ENCODE measurements at regions of chr2 and their contacts with region 1.

Region 1: GRCh38 chr2:98444436-98445176 is at the start of gene INPP4A:
- DNase-seq: peak; percentile 83
- ATAC-seq: peak; percentile 96 to 97
- total RNA-seq, gene INPP4A: 14.6 to 19.5 TPM

Region 2: GRCh38 chr2:98324181-98324580 is 120.4 kb before region 1 on chr2:
- intact Hi-C with region 1: no loop called
- DNase-seq: no peak
- ATAC-seq: no peak

Region 3: DNA sequence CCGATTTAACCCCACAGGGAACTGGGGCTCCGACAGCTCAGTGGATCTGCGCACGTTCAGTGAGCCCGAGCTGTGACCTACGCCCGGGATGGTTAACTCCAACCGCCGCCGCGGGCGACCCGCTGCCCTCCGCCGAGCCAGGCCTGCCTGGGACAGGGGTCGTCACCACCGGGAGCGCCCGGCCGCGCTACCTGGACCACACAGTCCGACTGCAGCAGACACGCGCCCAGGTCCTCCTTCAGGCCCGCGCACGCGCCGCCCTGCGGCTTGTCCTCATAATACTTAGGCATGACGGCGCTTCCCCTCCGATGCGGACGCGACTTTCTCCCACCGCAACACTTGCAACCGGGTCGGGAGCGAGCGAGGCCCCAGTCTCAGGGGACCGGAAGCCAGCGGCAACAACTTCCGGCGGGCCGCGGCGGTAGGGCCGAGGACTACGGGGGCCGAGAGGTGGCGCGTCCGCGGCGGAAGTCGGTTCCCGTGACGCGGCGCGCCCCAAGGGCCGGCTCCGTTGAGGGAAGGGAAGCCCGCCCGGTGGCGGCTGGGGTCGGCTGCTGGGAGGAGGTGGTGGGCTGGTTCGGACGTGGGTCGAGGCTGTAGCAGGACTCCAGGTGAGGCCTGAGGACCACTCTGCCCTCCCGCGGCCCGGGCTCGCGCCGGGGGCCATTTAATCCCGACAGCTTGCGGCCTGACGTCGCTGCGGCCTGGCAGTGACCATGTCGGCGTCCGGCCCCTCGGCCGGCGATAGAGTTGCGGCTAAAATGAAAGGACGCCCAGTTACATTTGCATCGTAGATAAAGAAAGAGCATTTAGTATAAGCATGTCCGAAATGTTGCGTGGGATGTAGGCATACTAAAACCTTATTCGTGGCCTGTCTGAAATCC is 163.8 kb after region 1 on chr2 and contains the starts of genes COA5 and UNC50:
- intact Hi-C with region 1: loop called in 1 of 2 experiments (anchors 10 kb)
- DNase-seq: peak; percentile 93
- ATAC-seq: peak; percentile 97 to 98
- total RNA-seq, gene COA5: 23.1 to 23.7 TPM
- total RNA-seq, gene UNC50: 28.3 to 33.7 TPM

Region 4: GRCh38 chr2:98730053-98730706 is 285.6 kb after region 1 on chr2:
- intact Hi-C with region 1: no loop called
- DNase-seq: peak; percentile 51
- ATAC-seq: peak; percentile 19 to 22

Measured in left cardiac atrium (tissue), 4 donors.